HCT116 (cell line): ENCODE measurements at regions of chr9 and their contacts with region 1.

Region 1: GRCh38 chr9:70419546-70420266 is 5.2 kb upstream of the KLF9 start:
- DNase-seq: peak; percentile 85
- ATAC-seq: peak; percentile 53
- H3K4me3 ChIP-seq: peak overlapping the region; percentile 53 to 75
- H3K27ac ChIP-seq: peak overlapping the region; percentile 96
- H3K4me1 ChIP-seq: peaks cover 31 to 66% of the 10 kb centered on the region in 2 experiments
- H3K27me3 ChIP-seq: no peaks in the 10 kb centered on the region
- CTCF ChIP-seq: no peak
- POLR2A ChIP-seq: peak; percentile 35
- RAD21 ChIP-seq: no peak

Region 2: DNA sequence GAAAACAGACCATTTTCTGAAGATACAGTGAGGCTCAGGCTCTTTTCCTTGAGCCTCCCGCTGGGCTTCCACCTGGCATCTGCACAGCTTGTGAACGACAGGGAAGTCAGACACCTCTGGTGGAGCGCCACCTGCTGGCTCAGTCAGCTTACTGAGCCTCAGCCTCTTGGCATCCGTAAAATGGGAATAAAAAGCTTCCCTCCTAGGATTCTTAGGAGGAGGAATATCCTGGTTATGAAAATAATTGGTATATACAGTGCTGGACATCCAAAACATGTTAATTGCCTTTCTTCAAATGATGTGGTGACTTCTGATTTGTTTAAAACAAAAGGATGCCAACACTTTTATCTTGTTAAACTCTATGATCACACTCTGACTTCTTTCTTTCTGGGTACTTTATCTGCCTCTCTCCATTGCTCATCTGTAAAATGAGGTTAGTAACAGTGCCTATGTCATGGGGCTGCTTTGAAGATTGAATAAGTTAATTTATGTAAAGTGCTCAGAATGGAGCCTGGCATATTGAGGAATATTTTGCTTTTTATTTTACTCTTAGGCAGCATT is 308.6 kb before region 1 on chr9:
- CTCF ChIA-PET with region 1: no interaction called
- POLR2A ChIA-PET with region 1: no interaction called
- RAD21 ChIA-PET with region 1: no interaction called
- intact Hi-C with region 1: no loop called
- DNase-seq: peak; percentile 66
- ATAC-seq: peak; percentile 82
- H3K4me3 ChIP-seq: no peak overlapping the region
- H3K27ac ChIP-seq: no peak overlapping the region
- H3K4me1 ChIP-seq: peaks cover 4 to 32% of the 10 kb centered on the region in 2 experiments; a peak in 3 of 4 replicates
- H3K27me3 ChIP-seq: no peaks in the 10 kb centered on the region
- CTCF ChIP-seq: peak; percentile 85 to 94 (median 93)
- POLR2A ChIP-seq: no peak
- RAD21 ChIP-seq: peak; percentile 88

Region 3: GRCh38 chr9:70318002-70318401 is 101.7 kb before region 1 on chr9:
- CTCF ChIA-PET with region 1: no interaction called
- POLR2A ChIA-PET with region 1: no interaction called
- RAD21 ChIA-PET with region 1: no interaction called
- intact Hi-C with region 1: no loop called
- DNase-seq: no peak
- ATAC-seq: peak; percentile 55
- H3K4me3 ChIP-seq: no peak overlapping the region
- H3K27ac ChIP-seq: no peak overlapping the region
- H3K4me1 ChIP-seq: no peaks in the 10 kb centered on the region
- H3K27me3 ChIP-seq: no peaks in the 10 kb centered on the region
- CTCF ChIP-seq: peak in 1 of 3 experiments; percentile 26; a peak in 2 of 6 replicates
- POLR2A ChIP-seq: no peak
- RAD21 ChIP-seq: no peak

Region 4: GRCh38 chr9:70438341-70438928 is 18.7 kb after region 1 on chr9:
- CTCF ChIA-PET with region 1: interaction called, 4 read pairs
- POLR2A ChIA-PET with region 1: interaction called, 10 read pairs
- RAD21 ChIA-PET with region 1: no interaction called
- intact Hi-C with region 1: no loop called
- DNase-seq: peak; percentile 68
- ATAC-seq: peak; percentile 91
- H3K4me3 ChIP-seq: peak overlapping the region in 1 of 2 experiments; percentile 42; a peak in 1 of 4 replicates
- H3K27ac ChIP-seq: peak overlapping the region; percentile 18; the same call in 1 of the 2 replicates
- H3K4me1 ChIP-seq: peaks cover 20 to 30% of the 10 kb centered on the region in 2 experiments; a peak in 3 of 4 replicates
- H3K27me3 ChIP-seq: no peaks in the 10 kb centered on the region
- CTCF ChIP-seq: no peak
- POLR2A ChIP-seq: no peak
- RAD21 ChIP-seq: no peak

Region 5: GRCh38 chr9:70569070-70569772 is 149.5 kb after region 1 on chr9:
- CTCF ChIA-PET with region 1: no interaction called
- POLR2A ChIA-PET with region 1: no interaction called
- RAD21 ChIA-PET with region 1: no interaction called
- intact Hi-C with region 1: no loop called
- DNase-seq: no peak
- ATAC-seq: no peak
- H3K4me3 ChIP-seq: no peak overlapping the region
- H3K27ac ChIP-seq: no peak overlapping the region
- H3K4me1 ChIP-seq: no peaks in the 10 kb centered on the region
- H3K27me3 ChIP-seq: no peaks in the 10 kb centered on the region
- CTCF ChIP-seq: no peak
- POLR2A ChIP-seq: no peak
- RAD21 ChIP-seq: no peak